ENCODE measurements at regions of chr19 and their contacts with region 1.

Region 1: DNA sequence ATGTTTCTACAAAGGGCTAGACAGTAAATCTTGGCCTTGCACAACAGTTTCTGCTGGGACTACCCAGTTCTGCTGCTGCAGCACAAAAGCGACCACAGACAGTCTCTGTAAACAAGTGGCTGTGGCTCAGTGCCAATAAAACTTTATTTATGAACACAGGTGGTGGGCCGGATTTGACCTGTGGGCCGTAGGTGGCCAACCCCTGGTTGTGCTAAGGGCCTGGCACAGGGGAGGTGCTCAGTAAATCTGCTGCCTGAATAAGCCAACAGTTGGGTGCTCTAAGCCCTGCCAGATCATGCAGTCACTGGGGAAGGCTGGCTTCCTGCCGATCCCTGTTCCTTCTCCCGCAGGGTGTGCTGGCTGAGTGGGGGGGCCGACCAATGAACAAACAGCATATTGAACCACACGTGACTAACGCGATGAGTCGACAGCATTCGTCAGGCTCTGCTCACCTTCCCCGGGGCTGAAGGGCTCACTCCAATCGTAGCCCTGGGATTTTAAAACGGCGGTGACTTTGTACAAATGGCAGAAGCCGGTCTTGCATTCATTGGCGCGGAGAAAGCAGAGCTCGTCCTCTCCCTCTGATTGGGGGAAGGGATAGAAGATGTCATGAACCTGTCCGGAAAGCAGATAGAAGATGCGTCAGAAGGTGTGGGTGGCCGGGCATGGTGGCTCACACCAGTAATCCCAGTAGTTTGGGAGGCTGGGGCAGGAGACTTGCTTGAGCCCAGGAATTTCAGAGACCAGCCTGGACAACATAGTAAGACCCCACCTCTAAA is 24.3 kb upstream of the MYDGF start:
- DNase-seq: peak; percentile 100
- H3K4me3 Mint-ChIP-seq: peak overlapping the region; percentile 70
- H3K27ac Mint-ChIP-seq: peak overlapping the region; percentile 93
- H3K4me1 Mint-ChIP-seq: peaks cover 26% of the 10 kb centered on the region
- H3K27me3 Mint-ChIP-seq: no peaks in the 10 kb centered on the region
- CTCF ChIP-seq: no peak

Region 2: DNA sequence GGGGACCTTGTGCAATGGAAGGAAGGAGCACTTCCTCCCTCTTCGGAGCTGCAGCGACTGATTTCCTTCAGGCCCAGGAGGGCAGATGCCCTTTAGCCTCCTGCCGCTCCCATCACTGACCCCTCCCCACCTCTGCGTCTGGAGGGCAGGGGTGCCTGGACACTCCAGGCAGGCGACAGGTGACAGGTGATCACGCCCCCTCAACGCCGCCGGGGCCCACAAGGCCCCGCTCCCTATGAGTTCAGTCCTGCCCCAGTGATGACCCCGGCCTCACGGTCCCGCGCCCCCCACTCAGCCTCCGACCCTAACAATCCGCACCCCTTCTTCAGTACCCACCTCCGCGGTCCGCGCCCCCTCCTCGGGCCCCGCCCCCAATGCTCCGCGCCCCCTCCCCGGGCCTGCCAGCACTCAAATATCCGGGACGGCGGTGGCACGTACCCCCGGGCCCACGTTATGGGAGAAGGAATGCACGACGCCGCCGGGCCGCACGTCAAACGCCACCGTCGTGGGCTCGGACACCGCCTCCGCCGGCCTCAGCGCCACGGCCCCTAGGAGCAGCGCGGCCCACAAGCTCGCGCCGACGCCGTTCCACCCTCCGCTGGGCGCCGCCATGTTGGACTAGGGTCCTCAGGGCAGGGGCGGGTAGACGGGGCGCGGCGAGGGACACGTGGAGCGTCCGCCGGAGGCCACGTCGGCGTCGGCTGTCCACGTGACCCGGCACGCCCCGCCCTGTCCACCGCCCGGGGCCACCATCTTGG is 24.5 kb before region 1 on chr19 and contains the start of gene MYDGF:
- CTCF ChIA-PET with region 1: no interaction called
- POLR2A ChIA-PET with region 1: interaction called, 26 read pairs
- intact Hi-C with region 1: loop called (anchors 1 kb)
- DNase-seq: peak; percentile 88
- H3K4me3 Mint-ChIP-seq: peak within 1 kb of the TSS; percentile 86
- H3K27ac Mint-ChIP-seq: peak within 1 kb of the TSS; percentile 92
- H3K4me1 Mint-ChIP-seq: no peaks in the 10 kb centered on the region
- H3K27me3 Mint-ChIP-seq: no peaks in the 10 kb centered on the region
- CTCF ChIP-seq: no peak
- total RNA-seq, gene MYDGF: 188 and 231 TPM in 2 replicates

Region 3: DNA sequence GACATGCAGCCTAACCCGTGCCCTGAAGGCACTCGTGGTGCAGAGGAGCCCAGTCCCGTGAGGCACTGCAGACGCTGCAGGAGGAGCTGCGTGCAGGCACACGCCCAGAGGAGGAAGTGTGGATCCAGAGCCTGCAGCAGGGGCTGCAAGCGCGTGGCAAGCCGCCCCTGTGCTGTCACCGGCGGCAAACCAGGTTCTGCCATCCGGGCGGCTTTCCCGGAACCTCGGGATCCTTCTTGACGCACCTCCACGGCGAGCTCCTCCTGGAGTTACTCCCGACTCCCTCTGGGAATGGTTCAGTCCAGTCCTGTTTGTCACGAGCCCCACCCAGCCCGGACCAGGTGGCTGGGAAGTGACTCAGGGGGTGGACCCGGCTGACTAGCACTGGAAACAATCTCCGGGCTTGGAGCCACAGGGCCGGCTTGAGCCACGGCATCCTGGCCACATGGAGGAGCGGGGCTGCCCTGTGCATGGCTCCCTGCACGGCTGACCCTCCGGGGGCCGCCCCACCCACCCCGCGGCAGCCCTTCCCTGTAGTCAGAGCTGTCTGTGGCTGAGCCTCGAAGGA is 19.1 kb after region 1 on chr19:
- CTCF ChIA-PET with region 1: interaction called, 3 read pairs
- POLR2A ChIA-PET with region 1: interaction called, 62 read pairs
- intact Hi-C with region 1: loop called (anchors 1 kb)
- DNase-seq: peak; percentile 99
- H3K4me3 Mint-ChIP-seq: peak overlapping the region; percentile 70
- H3K27ac Mint-ChIP-seq: peak overlapping the region; percentile 90
- H3K4me1 Mint-ChIP-seq: peaks cover 24% of the 10 kb centered on the region
- H3K27me3 Mint-ChIP-seq: no peaks in the 10 kb centered on the region
- CTCF ChIP-seq: no peak